ENCODE measurements at regions of chr13 and their contacts with region 1.

Region 1: DNA sequence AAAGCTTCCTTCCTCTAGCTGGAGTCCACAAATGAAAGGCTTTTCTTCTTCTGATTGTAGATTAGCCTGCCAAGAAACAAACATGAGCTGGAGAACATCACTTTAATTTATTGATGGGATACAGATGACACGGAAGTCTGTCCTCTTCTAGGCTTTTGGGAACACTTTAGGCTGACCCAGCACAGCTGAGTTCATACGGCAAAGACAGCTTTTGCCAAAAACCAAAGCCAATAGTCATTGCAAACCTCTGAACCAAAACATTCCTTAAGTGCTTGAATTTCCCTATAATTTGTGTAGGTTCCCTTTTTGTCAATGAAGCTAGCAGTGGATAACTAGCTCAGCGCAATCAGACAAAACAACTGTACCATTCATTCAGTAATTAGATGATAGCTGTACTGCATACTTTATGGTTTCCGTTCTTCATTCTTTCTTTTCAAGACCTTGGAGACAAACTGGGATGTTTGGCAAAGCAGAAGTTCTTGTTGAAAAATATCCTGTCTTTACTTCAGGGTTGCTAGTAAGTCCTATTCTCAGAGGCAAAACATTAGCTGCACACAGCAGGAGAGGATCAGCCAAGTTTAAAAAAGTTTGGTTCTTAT is 95.7 kb upstream of the SPRY2 start:
- DNase-seq: no peak
- H3K4me3 ChIP-seq: no peak overlapping the region
- H3K27ac ChIP-seq: no peak overlapping the region
- H3K4me1 ChIP-seq: no peaks in the 10 kb centered on the region
- H3K27me3 ChIP-seq: no peaks in the 10 kb centered on the region
- CTCF ChIP-seq: no peak
- POLR2A ChIP-seq: no peak

Region 2: DNA sequence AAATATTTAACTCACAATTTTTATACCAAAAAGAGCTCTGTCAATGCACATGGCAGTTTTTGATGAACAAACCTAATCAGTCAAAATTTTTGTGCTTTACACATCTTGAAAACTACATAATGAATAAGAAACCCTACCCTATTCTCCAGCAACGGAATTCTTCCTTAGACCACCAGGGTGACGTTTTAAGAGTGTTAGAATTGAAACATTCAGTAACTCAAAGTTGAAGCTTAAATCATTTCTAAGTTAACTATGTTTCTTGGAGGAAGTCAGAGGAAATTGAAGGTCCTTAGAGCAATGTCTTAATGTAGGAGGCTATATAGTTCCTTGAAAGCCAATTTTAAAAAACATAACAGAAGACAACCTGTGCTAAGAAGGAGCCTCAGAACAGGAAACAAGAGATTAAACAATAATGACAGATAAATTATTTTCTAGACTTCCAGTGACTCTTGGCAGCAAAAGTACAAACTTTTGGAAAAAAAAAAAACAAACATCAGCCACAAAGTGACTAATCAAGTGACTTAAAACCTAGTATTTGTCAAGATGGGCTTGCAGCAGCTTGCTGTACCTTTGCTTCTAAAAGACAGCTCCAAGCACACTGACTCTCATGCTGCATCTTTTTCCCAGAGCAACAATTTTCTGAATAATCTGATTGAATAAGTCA is 101.9 kb before region 1 on chr13:
- CTCF ChIA-PET with region 1: no interaction called
- POLR2A ChIA-PET with region 1: interaction called, 10 read pairs
- dilution Hi-C with region 1: no loop called
- intact Hi-C with region 1: no loop called
- DNase-seq: peak; percentile 24
- H3K4me3 ChIP-seq: no peak overlapping the region
- H3K27ac ChIP-seq: peak overlapping the region; percentile 7
- H3K4me1 ChIP-seq: peaks cover 34% of the 10 kb centered on the region
- H3K27me3 ChIP-seq: no peaks in the 10 kb centered on the region
- CTCF ChIP-seq: peak in 1 of 2 donors; percentile 1
- POLR2A ChIP-seq: no peak

Region 3: GRCh38 chr13:80726868-80727267 is 290.2 kb after region 1 on chr13:
- CTCF ChIA-PET with region 1: no interaction called
- POLR2A ChIA-PET with region 1: no interaction called
- dilution Hi-C with region 1: no loop called
- intact Hi-C with region 1: no loop called
- DNase-seq: no peak
- H3K4me3 ChIP-seq: no peak overlapping the region
- H3K27ac ChIP-seq: no peak overlapping the region
- H3K4me1 ChIP-seq: no peaks in the 10 kb centered on the region
- H3K27me3 ChIP-seq: no peaks in the 10 kb centered on the region
- CTCF ChIP-seq: no peak
- POLR2A ChIP-seq: no peak